ENCODE measurements at regions of chr9 and their contacts with region 1.

Region 1: GRCh38 chr9:76810377-76810957 is 46.2 kb downstream of the PCA3 start:
- DNase-seq: peak; percentile 35 to 42
- H3K4me3 ChIP-seq: no peak overlapping the region
- H3K27ac ChIP-seq: no peak overlapping the region
- H3K4me1 ChIP-seq: no peaks in the 10 kb centered on the region
- H3K27me3 ChIP-seq: no peaks in the 10 kb centered on the region
- CTCF ChIP-seq: peak; percentile 37 to 91 (median 72)
- POLR2A ChIP-seq: no peak

Region 2: DNA sequence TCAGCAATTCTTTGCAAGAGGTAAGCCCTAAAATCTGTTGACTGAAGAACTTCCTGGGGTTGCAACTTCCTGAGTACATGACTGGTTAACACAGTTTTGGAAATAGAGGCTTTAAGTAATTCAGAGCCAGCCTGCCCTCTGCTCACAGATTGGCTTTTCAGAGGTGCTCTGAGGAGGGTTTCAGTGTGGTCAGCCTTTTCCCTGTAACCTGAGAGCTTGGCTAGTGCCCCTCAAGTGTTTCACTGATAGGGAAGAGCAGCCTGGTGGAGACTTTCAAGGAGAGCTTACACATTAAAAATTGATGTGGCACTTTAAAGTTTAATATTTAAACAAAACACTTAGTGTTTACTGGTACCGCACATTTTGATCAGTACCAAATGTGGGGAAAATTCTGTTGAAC is 152.3 kb after region 1 on chr9:
- intact Hi-C with region 1: no loop called
- DNase-seq: no peak
- H3K4me3 ChIP-seq: no peak overlapping the region
- H3K27ac ChIP-seq: no peak overlapping the region
- H3K4me1 ChIP-seq: no peaks in the 10 kb centered on the region
- H3K27me3 ChIP-seq: no peaks in the 10 kb centered on the region
- CTCF ChIP-seq: no peak
- POLR2A ChIP-seq: no peak

Region 3: DNA sequence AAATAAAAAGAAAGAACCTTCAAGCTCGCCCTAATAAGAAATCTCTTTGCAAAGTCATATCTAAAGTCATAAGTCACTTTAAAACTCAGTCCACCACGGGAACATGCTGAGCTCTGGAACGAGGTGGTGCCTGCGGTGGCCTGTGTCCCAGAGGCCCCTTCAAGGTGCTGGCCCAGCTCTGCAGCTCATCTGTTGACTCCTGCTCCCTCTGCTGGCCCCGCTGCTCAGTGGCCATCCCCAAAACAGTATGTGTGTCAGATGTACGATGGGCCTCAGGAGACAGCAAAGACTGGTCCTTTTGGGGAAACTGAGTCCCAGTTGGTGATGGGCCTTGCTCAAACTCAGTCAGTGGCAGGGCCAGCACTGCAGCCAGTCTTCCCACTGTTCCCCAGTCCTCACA is 186.2 kb after region 1 on chr9:
- intact Hi-C with region 1: loop called (anchors 10 kb)
- DNase-seq: peak; percentile 40 to 54
- H3K4me3 ChIP-seq: no peak overlapping the region
- H3K27ac ChIP-seq: no peak overlapping the region
- H3K4me1 ChIP-seq: no peaks in the 10 kb centered on the region
- H3K27me3 ChIP-seq: no peaks in the 10 kb centered on the region
- CTCF ChIP-seq: peak in 3 of 6 experiments; percentile 40 to 51 (median 42)
- POLR2A ChIP-seq: no peak

Region 4: GRCh38 chr9:77149879-77150278 is 339.4 kb after region 1 on chr9:
- intact Hi-C with region 1: loop called (anchors 5 kb)
- DNase-seq: no peak
- H3K4me3 ChIP-seq: no peak overlapping the region
- H3K27ac ChIP-seq: no peak overlapping the region
- H3K4me1 ChIP-seq: no peaks in the 10 kb centered on the region
- H3K27me3 ChIP-seq: no peaks in the 10 kb centered on the region
- CTCF ChIP-seq: no peak
- POLR2A ChIP-seq: no peak